Ovary (tissue), 10 donors: ENCODE measurements at regions of chr18 and their contacts with region 1.

Region 1: DNA sequence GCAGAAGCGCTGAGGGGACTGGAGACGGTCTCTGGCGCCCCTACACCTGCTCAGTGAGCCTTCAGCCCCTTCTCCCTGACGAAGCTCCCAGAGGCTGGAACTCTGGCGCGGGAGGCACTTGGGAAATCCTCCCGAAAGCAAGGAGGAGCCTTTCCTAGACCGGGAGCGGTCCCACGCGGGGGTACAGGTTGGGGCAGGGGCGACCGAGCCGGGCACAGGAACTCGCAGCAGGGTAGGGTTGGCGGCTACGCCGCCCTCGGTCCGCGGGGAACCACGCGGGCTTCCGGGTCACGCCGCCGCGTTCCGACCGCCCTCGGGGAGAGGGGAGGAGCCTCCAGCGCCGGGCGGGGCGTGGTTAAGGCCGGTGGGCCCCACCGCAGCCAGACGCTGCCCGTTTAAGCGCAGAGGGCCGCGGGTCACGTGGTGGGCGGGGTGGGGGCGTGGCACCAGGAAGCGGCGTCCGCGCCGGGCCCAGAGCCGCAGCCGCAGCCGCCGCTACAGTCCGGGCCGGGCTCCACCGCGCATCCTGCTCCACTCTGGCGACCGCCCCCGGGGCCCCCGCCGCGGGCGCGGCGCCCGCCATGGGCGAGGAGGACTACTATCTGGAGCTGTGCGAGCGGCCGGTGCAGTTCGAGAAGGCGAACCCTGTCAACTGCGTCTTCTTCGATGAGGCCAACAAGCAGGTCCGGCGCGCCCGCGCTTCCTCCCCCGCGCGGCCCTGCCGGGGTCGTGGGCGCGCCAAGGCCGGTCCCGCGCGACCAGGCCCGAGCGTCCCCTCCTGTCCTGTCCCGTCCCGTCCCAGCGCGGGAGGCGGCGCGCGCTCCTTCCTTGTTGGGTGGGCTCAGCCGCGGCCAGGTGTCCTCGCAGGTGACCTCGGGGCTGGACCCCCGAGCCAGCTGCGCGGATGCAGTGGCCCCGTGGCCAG is at the start of gene RMC1:
- DNase-seq: peak; percentile 97 to 98 (median 98)
- H3K4me3 ChIP-seq: peak within 1 kb of the TSS; percentile 85
- H3K27ac ChIP-seq: peak within 1 kb of the TSS; percentile 36 to 93
- H3K4me1 ChIP-seq: peaks cover 5% of the 10 kb centered on the region
- H3K27me3 ChIP-seq: no peaks in the 10 kb centered on the region
- CTCF ChIP-seq: peak in 2 of 3 donors; percentile 26 to 36
- EP300 ChIP-seq: no peak
- POLR2A ChIP-seq: peak; percentile 59
- total RNA-seq, gene RMC1: 15.0 to 29.2 (median 21.8) TPM

Region 2: GRCh38 chr18:23231340-23232021 is 271.8 kb before region 1 on chr18:
- intact Hi-C with region 1: no loop called
- DNase-seq: peak in 2 of 5 donors; percentile 29 to 44
- H3K4me3 ChIP-seq: no peak overlapping the region
- H3K27ac ChIP-seq: no peak overlapping the region
- H3K4me1 ChIP-seq: peaks cover 14% of the 10 kb centered on the region
- H3K27me3 ChIP-seq: no peaks in the 10 kb centered on the region
- CTCF ChIP-seq: no peak
- EP300 ChIP-seq: peak; percentile 24
- POLR2A ChIP-seq: no peak

Region 3: DNA sequence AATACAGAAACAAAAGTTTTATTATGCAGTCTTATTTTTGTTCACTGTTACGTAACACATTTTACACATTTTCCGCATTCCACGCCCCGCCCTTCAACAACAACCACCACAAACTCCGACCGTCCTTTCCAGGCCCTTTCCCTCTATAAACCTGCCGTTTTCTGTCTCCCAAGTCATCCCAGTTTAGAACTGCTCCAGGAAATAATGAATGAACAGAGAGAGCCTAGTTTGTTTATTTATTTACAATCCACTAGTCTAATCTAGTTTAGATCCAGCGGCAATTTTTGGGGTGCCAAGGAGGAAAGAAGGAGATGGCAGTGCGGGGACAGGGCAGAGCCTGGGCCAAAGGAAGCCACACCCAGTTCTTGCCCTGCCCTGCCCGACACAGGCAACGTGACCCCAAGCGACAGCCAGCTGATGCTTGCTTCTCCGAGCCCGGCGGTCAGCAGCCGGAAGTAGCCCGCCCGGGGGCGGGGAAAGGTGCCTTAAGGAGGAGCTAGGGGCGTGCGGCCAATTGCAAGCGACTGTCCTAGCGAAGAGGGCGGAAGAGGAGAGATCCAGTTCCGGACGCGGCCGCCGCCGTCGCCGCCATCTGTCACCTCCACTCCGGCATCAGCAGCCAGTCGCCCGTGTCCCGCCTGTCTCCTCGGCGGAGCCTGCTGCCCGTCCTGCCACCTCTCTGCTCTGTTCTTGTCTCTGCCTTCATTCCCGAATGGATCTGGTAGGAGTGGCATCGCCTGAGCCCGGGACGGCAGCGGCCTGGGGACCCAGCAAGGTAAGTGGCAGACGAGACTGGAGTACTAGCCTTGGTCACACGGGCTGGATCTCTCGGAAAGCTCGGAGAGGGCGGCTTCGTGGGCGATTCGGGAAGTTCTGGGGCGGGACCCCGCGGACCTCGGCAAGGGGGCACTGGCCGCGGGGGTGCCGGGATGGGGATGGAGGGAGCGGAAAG is 50.3 kb before region 1 on chr18 and contains the start of gene RIOK3:
- intact Hi-C with region 1: loop called in 1 of 4 experiments (anchors 10 kb)
- DNase-seq: peak; percentile 93 to 97 (median 94)
- H3K4me3 ChIP-seq: peak within 1 kb of the TSS; percentile 97
- H3K27ac ChIP-seq: peak within 1 kb of the TSS; percentile 19 to 65
- H3K4me1 ChIP-seq: peaks cover 8% of the 10 kb centered on the region
- H3K27me3 ChIP-seq: no peaks in the 10 kb centered on the region
- CTCF ChIP-seq: peak in 1 of 3 donors; percentile 29
- EP300 ChIP-seq: no peak
- POLR2A ChIP-seq: peak; percentile 73
- total RNA-seq, gene RIOK3: 21.5 to 47.6 (median 39.2) TPM

Region 4: GRCh38 chr18:23586249-23587196 is 83.2 kb after region 1 on chr18 and contains the start of gene NPC1:
- intact Hi-C with region 1: loop called in 2 of 4 experiments (anchors 2 to 5 kb)
- DNase-seq: peak; percentile 93 to 96 (median 94)
- H3K4me3 ChIP-seq: peak within 1 kb of the TSS; percentile 86
- H3K27ac ChIP-seq: peak within 1 kb of the TSS; percentile 98
- H3K4me1 ChIP-seq: no peaks in the 10 kb centered on the region
- H3K27me3 ChIP-seq: no peaks in the 10 kb centered on the region
- CTCF ChIP-seq: peak; percentile 66 to 95 (median 92)
- EP300 ChIP-seq: peak; percentile 31
- POLR2A ChIP-seq: peak; percentile 86
- total RNA-seq, gene NPC1: 21.8 to 54.5 (median 29.8) TPM

Region 5: GRCh38 chr18:23812546-23813440 is 309.5 kb after region 1 on chr18:
- intact Hi-C with region 1: loop called in 1 of 4 experiments (anchors 10 kb)
- DNase-seq: no peak
- H3K4me3 ChIP-seq: no peak overlapping the region
- H3K27ac ChIP-seq: no peak overlapping the region
- H3K4me1 ChIP-seq: peaks cover 6% of the 10 kb centered on the region
- H3K27me3 ChIP-seq: no peaks in the 10 kb centered on the region
- CTCF ChIP-seq: peak in 2 of 3 donors; percentile 44 to 45
- EP300 ChIP-seq: no peak
- POLR2A ChIP-seq: no peak